Prostate gland (tissue), 2 donors: ENCODE measurements at regions of chr2 and their contacts with region 1.

Region 1: GRCh38 chr2:182980115-182980514 is 58.1 kb downstream of the NCKAP1 start:
- DNase-seq: no peak
- H3K4me3 ChIP-seq: no peak overlapping the region
- H3K27ac ChIP-seq: no peak overlapping the region
- H3K4me1 ChIP-seq: no peaks in the 10 kb centered on the region
- H3K27me3 ChIP-seq: no peaks in the 10 kb centered on the region
- CTCF ChIP-seq: peak in 3 of 4 experiments; percentile 47 to 59 (median 47)
- POLR2A ChIP-seq: no peak

Region 2: GRCh38 chr2:182763311-182763912 is 216.7 kb before region 1 on chr2:
- intact Hi-C with region 1: loop called (anchors 2 kb)
- DNase-seq: peak; percentile 20
- H3K4me3 ChIP-seq: no peak overlapping the region
- H3K27ac ChIP-seq: no peak overlapping the region
- H3K4me1 ChIP-seq: no peaks in the 10 kb centered on the region
- H3K27me3 ChIP-seq: no peaks in the 10 kb centered on the region
- CTCF ChIP-seq: peak in 2 of 4 experiments; percentile 51 to 54
- POLR2A ChIP-seq: no peak

Region 3: DNA sequence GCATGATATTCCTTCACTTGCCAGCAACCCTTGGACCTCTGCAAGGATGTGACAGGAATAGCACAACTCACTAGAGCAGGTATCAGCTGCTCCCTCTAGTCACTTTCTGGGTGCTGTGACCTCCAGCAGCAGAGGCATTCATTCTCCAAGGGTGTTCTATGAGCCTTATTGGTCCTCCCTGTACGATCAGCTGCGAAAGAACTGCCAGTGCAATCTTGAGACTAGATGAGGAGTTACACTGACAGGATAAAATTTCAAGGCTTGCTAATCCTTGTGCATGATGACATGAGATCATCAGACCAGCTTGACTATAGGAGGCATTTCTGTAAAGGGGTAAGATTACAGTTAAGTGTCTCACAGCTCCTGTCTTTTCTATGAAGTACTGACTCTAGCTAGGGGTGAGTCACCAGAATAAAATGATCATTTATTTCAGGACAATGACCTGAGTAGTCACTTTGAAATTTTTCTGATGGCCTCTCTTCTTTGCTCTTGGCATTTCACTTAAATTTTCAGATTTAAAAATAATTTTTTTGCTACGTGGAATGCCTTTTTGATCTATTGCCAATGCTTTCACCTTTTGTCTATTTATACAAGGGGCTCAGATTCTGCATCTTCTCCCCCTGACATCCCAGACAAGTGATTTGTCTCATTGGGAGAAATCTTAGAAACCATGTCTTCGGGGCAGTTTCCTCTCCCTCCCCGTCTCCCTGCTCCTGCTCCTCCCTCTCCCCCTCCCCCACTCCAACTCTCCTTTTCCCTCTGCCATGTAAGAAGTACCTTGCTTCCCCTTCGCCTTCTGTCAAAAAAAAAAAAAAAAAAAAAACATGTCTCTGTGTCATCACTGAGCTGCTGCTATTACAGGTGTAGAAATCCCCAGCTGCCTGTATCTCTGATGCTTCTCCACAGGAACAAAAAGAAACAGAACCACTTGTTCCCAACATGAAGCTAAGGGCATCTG is 64.5 kb before region 1 on chr2:
- intact Hi-C with region 1: no loop called
- DNase-seq: no peak
- H3K4me3 ChIP-seq: no peak overlapping the region
- H3K27ac ChIP-seq: no peak overlapping the region
- H3K4me1 ChIP-seq: no peaks in the 10 kb centered on the region
- H3K27me3 ChIP-seq: no peaks in the 10 kb centered on the region
- CTCF ChIP-seq: no peak
- POLR2A ChIP-seq: no peak

Region 4: DNA sequence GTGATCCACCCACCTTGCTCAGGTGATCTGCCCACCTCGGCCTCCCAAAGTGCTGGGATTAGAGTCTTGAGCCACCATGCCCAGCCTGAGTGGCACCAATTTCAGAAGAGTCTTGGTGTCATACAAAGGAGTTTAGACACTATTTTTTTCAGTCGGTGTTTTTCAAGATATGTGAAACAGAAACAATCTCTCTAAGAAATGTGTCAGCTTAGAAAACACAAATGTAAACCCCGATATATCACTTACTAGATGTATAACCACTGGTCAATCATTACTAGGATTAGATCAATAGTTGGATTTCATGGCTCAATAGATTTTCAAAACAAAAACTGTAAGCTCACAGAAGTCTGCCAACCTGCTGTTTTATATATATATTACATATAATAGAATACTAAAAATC is 46.5 kb before region 1 on chr2:
- intact Hi-C with region 1: no loop called
- DNase-seq: no peak
- H3K4me3 ChIP-seq: no peak overlapping the region
- H3K27ac ChIP-seq: no peak overlapping the region
- H3K4me1 ChIP-seq: no peaks in the 10 kb centered on the region
- H3K27me3 ChIP-seq: no peaks in the 10 kb centered on the region
- CTCF ChIP-seq: no peak
- POLR2A ChIP-seq: no peak